ENCODE measurements at regions of chr11 and their contacts with region 1.

Region 1: DNA sequence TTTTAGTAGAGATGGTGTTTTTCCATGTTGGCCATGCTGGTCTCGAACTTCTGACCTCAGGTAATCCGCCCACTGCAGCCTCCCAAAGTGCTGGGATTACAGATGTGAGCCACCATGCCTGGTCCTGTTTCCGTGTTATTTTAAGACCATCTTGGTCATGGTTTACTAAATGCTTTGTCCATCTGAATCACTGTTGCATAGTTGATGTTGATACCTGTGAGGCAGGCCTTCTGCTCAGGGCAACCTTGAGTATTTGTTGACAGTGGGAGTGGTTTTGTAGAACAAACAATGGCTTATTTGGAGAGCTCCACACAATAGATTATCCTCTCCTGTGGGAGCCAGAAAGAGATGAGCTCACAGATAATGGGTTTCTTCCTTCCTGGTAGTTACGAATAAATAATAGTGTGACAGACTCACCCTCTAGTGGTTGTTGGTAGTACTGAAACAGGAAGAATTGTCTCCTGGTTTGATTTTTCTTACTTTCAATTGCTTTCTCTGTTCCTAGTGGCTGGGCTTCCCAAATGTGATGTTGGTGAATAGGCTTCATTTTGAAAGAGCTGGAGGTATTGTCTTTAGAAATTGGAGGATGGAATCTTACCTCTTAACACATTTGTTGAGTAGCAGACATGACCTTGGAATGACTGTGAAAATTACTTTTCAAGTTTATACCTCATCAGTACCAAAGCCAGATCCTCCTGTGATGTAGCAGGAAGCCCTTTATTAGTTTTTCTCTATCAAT is 39.0 kb downstream of the CTNND1 start:
- DNase-seq: peak; percentile 88 to 95
- ATAC-seq: peak; percentile 96 to 97
- H3K4me3 ChIP-seq: no peak overlapping the region
- H3K27ac ChIP-seq: peak overlapping the region; percentile 49 to 61; a peak in 5 of 6 replicates
- H3K4me1 ChIP-seq: peaks cover 33% of the 10 kb centered on the region
- CTCF ChIP-seq: peak; percentile 93
- EP300 ChIP-seq: no peak
- POLR2A ChIP-seq: no peak
- RAD21 ChIP-seq: peak; percentile 92 to 94

Region 2: GRCh38 chr11:57741132-57742086 is 59.2 kb before region 1 on chr11 and contains the start of gene SELENOH:
- CTCF ChIA-PET with region 1: interaction called, 231 read pairs
- POLR2A ChIA-PET with region 1: interaction called, 14 read pairs
- DNase-seq: peak; percentile 94 to 98
- ATAC-seq: peak; percentile 97 to 98
- H3K4me3 ChIP-seq: peak within 1 kb of the TSS; percentile 88
- H3K27ac ChIP-seq: peak within 1 kb of the TSS; percentile 90 to 95
- H3K4me1 ChIP-seq: peaks cover 14% of the 10 kb centered on the region
- CTCF ChIP-seq: no peak
- EP300 ChIP-seq: no peak
- POLR2A ChIP-seq: peak; percentile 53
- RAD21 ChIP-seq: peak in 1 of 2 experiments; percentile 18; a peak in 2 of 5 replicates
- polyA plus RNA-seq, gene SELENOH: 99.7 and 115 TPM in 2 replicates

Region 3: GRCh38 chr11:57761301-57762234 is 39.0 kb before region 1 on chr11 and contains the start of gene CTNND1:
- CTCF ChIA-PET with region 1: interaction called, 216 read pairs
- POLR2A ChIA-PET with region 1: interaction called, 26 read pairs
- DNase-seq: peak; percentile 98 to 99
- ATAC-seq: peak; percentile 98 to 99
- H3K4me3 ChIP-seq: peak within 1 kb of the TSS; percentile 73
- H3K27ac ChIP-seq: peak within 1 kb of the TSS; percentile 91 to 97
- H3K4me1 ChIP-seq: peaks cover 22% of the 10 kb centered on the region
- CTCF ChIP-seq: no peak
- EP300 ChIP-seq: no peak
- POLR2A ChIP-seq: peak; percentile 36
- RAD21 ChIP-seq: peak in 1 of 2 experiments; percentile 28; a peak in 1 of 5 replicates
- polyA plus RNA-seq, gene CTNND1: 146 and 148 TPM in 2 replicates

Region 4: GRCh38 chr11:57778318-57779037 is 22.1 kb before region 1 on chr11:
- CTCF ChIA-PET with region 1: interaction called, 15 read pairs
- POLR2A ChIA-PET with region 1: interaction called, 9 read pairs
- DNase-seq: peak; percentile 88 to 94
- ATAC-seq: peak; percentile 95 to 96
- H3K4me3 ChIP-seq: peak overlapping the region; percentile 31
- H3K27ac ChIP-seq: peak overlapping the region; percentile 83 to 88
- H3K4me1 ChIP-seq: peaks cover 92% of the 10 kb centered on the region
- CTCF ChIP-seq: no peak
- EP300 ChIP-seq: no peak
- POLR2A ChIP-seq: no peak
- RAD21 ChIP-seq: no peak; a peak in 1 of 5 replicates

Region 5: GRCh38 chr11:57815476-57815875 is 14.9 kb after region 1 on chr11:
- CTCF ChIA-PET with region 1: interaction called, 38 read pairs
- POLR2A ChIA-PET with region 1: no interaction called
- DNase-seq: no peak
- ATAC-seq: no peak
- H3K4me3 ChIP-seq: no peak overlapping the region
- H3K27ac ChIP-seq: no peak overlapping the region
- H3K4me1 ChIP-seq: no peaks in the 10 kb centered on the region
- CTCF ChIP-seq: no peak
- EP300 ChIP-seq: no peak
- POLR2A ChIP-seq: no peak
- RAD21 ChIP-seq: no peak